ENCODE measurements at regions of chr7 and their contacts with region 1.

Region 1: DNA sequence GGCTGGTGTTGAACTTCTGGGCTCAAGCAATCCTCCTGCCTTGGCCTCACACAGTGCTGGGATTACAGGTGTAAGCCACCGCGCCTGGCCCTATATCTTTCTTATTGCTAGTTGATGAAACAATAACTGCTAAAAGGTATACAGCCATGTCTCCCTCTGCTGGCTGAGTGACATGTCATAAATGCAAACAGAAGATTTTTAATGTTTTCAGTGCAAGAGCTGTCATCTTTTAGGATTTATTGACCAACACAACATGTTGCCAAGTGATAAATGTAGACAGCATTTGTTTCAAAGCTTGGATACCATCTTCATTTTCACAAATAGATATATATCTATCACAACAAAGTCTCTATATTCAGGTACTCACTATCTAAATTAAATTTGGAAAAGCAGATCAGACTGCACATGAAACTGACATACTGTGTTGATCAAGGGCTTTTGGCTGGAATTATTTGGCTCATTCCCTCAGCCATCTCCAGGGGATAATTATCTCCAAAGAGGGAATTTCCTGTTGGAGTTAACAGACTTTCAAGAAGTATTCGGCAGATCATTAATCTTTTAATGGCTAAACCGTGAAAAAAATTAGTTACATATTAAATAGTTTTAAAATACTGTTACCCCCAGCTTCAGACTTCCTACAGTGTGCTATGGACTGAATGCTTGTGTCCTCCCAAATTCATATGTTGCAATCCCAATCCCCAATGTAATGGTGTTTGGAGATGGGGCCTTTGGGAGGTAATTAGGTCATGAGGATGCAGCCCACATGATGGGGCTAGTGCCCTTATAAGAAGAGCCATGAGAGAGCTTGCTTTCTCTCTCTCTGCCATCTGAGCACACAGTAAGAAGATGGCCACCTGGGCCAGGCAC is 41.3 kb upstream of the SRPK2 start:
- DNase-seq: peak in 8 of 9 donors; percentile 9 to 66 (median 58)
- ATAC-seq: peak; percentile 76
- H3K4me3 ChIP-seq: no peak overlapping the region
- H3K4me3 Mint-ChIP-seq: no peak overlapping the region
- H3K27ac ChIP-seq: no peak overlapping the region
- H3K27ac Mint-ChIP-seq: peak overlapping the region in 1 of 9 donors; percentile 19
- H3K4me1 ChIP-seq: no peaks in the 10 kb centered on the region
- H3K4me1 Mint-ChIP-seq: peaks cover 0 to 5% (median 0%) of the 10 kb centered on the region in 7 donors
- H3K27me3 ChIP-seq: no peaks in the 10 kb centered on the region
- H3K27me3 Mint-ChIP-seq: no peaks in the 10 kb centered on the region

Region 2: GRCh38 chr7:105046414-105046813 is 383.6 kb before region 1 on chr7:
- CTCF ChIA-PET with region 1: no interaction called
- POLR2A ChIA-PET with region 1: no interaction called
- intact Hi-C with region 1: loop called in 1 of 2 experiments (anchors 5 kb)
- DNase-seq: no peak
- ATAC-seq: no peak
- H3K4me3 ChIP-seq: no peak overlapping the region
- H3K4me3 Mint-ChIP-seq: peak overlapping the region in 1 of 10 donors; percentile 44
- H3K27ac ChIP-seq: no peak overlapping the region
- H3K27ac Mint-ChIP-seq: peak overlapping the region in 6 of 9 donors; percentile 6 to 71 (median 42)
- H3K4me1 ChIP-seq: peaks cover 9 to 10% of the 10 kb centered on the region in 2 donors
- H3K4me1 Mint-ChIP-seq: peaks cover 32 to 76% (median 59%) of the 10 kb centered on the region in 7 donors
- H3K27me3 ChIP-seq: no peaks in the 10 kb centered on the region
- H3K27me3 Mint-ChIP-seq: no peaks in the 10 kb centered on the region

Region 3: GRCh38 chr7:105156731-105157130 is 273.2 kb before region 1 on chr7:
- CTCF ChIA-PET with region 1: interaction called, 4 read pairs
- POLR2A ChIA-PET with region 1: no interaction called
- intact Hi-C with region 1: loop called in 1 of 2 experiments (anchors 1 kb)
- DNase-seq: no peak
- ATAC-seq: no peak
- H3K4me3 ChIP-seq: no peak overlapping the region
- H3K4me3 Mint-ChIP-seq: no peak overlapping the region
- H3K27ac ChIP-seq: no peak overlapping the region
- H3K27ac Mint-ChIP-seq: peak overlapping the region in 2 of 9 donors; percentile 14
- H3K4me1 ChIP-seq: no peaks in the 10 kb centered on the region
- H3K4me1 Mint-ChIP-seq: peaks cover 2 to 9% (median 4%) of the 10 kb centered on the region in 7 donors
- H3K27me3 ChIP-seq: no peaks in the 10 kb centered on the region
- H3K27me3 Mint-ChIP-seq: no peaks in the 10 kb centered on the region

Region 4: DNA sequence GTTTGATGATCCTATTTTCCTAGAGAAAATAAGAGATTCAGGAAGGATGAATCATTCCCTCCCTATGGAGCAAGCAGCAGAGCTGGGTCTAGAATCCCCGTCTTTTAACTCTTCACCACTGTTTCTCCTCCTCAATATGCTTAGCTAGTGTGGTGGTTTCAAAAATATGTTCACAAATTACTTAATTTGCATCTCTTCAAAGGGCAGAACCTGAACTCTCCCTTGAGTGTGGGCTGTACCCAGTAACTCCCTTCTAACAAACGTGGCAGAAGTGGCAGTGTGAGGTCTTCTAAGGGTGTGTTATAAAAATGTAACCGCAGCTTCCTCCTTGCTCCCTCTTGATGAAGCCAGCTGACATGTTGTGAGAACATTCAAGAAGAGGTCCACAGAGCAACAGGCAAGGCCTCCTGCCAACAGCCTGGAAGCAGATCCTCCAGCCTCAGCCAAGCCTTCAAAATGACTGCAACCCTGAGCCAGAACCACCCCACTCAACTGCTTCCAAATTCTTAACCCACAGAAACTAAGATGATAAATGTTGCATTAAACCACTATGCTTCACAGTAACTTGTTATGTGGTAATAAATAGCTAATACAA is 77.9 kb before region 1 on chr7:
- CTCF ChIA-PET with region 1: interaction called, 7 read pairs
- POLR2A ChIA-PET with region 1: no interaction called
- intact Hi-C with region 1: loop called in 1 of 2 experiments (anchors 1 kb)
- DNase-seq: peak; percentile 22 to 88 (median 82)
- ATAC-seq: peak; percentile 99
- H3K4me3 ChIP-seq: peak overlapping the region; percentile 44
- H3K4me3 Mint-ChIP-seq: peak overlapping the region; percentile 74 to 89 (median 81)
- H3K27ac ChIP-seq: peak overlapping the region; percentile 48
- H3K27ac Mint-ChIP-seq: peak overlapping the region; percentile 73 to 98 (median 92)
- H3K4me1 ChIP-seq: peaks cover 62 to 67% of the 10 kb centered on the region in 2 donors
- H3K4me1 Mint-ChIP-seq: peaks cover 45 to 82% (median 66%) of the 10 kb centered on the region in 7 donors
- H3K27me3 ChIP-seq: no peaks in the 10 kb centered on the region
- H3K27me3 Mint-ChIP-seq: no peaks in the 10 kb centered on the region

Region 5: DNA sequence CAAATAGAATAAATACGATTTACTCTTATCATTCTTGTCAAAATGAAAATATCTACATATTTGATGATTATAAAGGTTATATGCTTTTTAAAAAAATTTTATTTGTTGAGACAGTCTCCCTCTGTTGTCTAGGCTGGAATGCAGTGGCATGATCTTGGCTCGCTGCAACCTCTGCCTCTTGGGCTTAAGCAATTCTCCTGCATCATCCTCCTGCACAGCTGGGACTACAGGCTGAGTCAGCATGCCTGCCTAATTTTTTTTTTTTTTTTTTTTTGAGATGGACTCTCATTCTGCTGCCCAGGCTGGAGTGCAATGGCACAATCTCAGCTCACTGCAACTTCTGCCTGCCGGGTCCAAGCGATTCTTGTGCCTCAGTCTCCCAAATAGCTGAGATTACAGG is 43.2 kb after region 1 on chr7:
- CTCF ChIA-PET with region 1: no interaction called
- POLR2A ChIA-PET with region 1: no interaction called
- intact Hi-C with region 1: no loop called
- DNase-seq: no peak
- ATAC-seq: no peak
- H3K4me3 ChIP-seq: no peak overlapping the region
- H3K4me3 Mint-ChIP-seq: no peak overlapping the region
- H3K27ac ChIP-seq: no peak overlapping the region
- H3K27ac Mint-ChIP-seq: no peak overlapping the region
- H3K4me1 ChIP-seq: no peaks in the 10 kb centered on the region
- H3K4me1 Mint-ChIP-seq: no peaks in the 10 kb centered on the region
- H3K27me3 ChIP-seq: no peaks in the 10 kb centered on the region
- H3K27me3 Mint-ChIP-seq: no peaks in the 10 kb centered on the region

Region 6: GRCh38 chr7:105487579-105488571 is 57.9 kb after region 1 on chr7:
- CTCF ChIA-PET with region 1: no interaction called
- POLR2A ChIA-PET with region 1: no interaction called
- intact Hi-C with region 1: loop called in 1 of 2 experiments (anchors 1 kb)
- DNase-seq: peak in 4 of 9 donors; percentile 4 to 31 (median 19)
- ATAC-seq: no peak
- H3K4me3 ChIP-seq: no peak overlapping the region
- H3K4me3 Mint-ChIP-seq: no peak overlapping the region
- H3K27ac ChIP-seq: no peak overlapping the region
- H3K27ac Mint-ChIP-seq: peak overlapping the region in 1 of 9 donors; percentile 20
- H3K4me1 ChIP-seq: no peaks in the 10 kb centered on the region
- H3K4me1 Mint-ChIP-seq: peaks cover 0 to 8% (median 0%) of the 10 kb centered on the region in 7 donors
- H3K27me3 ChIP-seq: no peaks in the 10 kb centered on the region
- H3K27me3 Mint-ChIP-seq: no peaks in the 10 kb centered on the region

Region 7: GRCh38 chr7:105853931-105854419 is 424.0 kb after region 1 on chr7:
- CTCF ChIA-PET with region 1: no interaction called
- POLR2A ChIA-PET with region 1: no interaction called
- intact Hi-C with region 1: no loop called
- DNase-seq: no peak
- ATAC-seq: no peak
- H3K4me3 ChIP-seq: no peak overlapping the region
- H3K4me3 Mint-ChIP-seq: no peak overlapping the region
- H3K27ac ChIP-seq: no peak overlapping the region
- H3K27ac Mint-ChIP-seq: peak overlapping the region in 1 of 9 donors; percentile 50
- H3K4me1 ChIP-seq: peaks cover 56 to 58% of the 10 kb centered on the region in 2 donors
- H3K4me1 Mint-ChIP-seq: peaks cover 50 to 83% (median 79%) of the 10 kb centered on the region in 7 donors
- H3K27me3 ChIP-seq: no peaks in the 10 kb centered on the region
- H3K27me3 Mint-ChIP-seq: peaks cover 0 to 9% (median 0%) of the 10 kb centered on the region in 5 donors

Measured in naive thymus-derived CD4-positive, alpha-beta T cell (primary cell).